PC-9 (cell line): ENCODE measurements at regions of chr5 and their contacts with region 1.

Region 1: DNA sequence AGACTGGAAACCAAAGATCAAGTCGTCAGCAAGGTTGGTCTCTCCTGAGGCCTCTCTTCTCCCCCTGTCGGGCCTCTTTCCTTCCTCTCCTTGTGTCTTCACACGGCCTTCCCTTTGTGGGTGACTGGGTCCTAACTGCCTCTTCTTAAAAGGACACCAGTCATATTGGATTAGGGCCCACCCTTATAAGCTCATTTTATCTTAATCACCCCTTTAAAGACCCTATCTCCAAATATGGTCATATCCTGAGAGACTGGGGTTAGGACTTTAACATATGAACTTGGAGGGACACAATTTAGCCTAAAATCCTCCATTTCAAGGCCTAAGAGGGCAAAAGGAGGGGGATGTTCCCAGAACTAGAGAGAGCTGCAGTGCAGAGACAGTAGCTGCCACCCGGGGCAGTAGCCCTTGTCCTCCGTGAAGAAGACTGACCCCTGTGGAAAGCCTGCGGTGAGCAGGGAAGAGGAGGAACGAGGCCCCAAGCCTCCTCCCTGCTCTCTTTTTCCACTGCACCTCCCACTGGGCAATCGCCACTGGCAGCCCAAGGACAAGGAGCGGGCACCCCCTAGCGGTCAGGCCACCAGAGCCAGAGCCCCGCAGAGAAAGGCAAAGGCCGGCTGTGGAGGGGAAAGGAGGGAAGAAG is 34.9 kb downstream of the CFAP90 start:
- DNase-seq: peak in 1 of 2 experiments; percentile 77
- H3K4me3 ChIP-seq: no peak overlapping the region
- H3K27ac ChIP-seq: no peak overlapping the region
- H3K4me1 ChIP-seq: no peaks in the 10 kb centered on the region
- H3K27me3 ChIP-seq: peaks cover 96% of the 10 kb centered on the region
- CTCF ChIP-seq: peak; percentile 92

Region 2: DNA sequence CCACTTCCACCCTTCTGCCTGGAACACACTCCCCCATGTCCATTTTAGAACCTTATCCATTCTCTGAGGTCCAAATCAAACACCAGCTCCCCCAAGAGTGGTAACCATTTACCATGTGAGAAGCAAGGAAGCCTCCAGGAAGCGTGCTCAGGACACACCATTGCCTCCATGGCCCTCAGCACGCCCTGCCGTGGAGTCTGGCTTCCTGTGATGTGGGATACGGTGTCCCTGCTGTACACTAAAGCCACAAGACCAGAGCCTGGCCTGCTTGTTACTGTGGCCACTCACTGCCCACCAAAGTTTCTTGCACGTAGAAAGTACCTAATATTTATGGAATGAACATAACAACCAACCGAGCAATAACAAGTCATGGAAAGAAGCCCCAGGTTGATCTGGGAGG is 1578.2 kb after region 1 on chr5:
- CTCF ChIA-PET with region 1: interaction called, 18 read pairs
- POLR2A ChIA-PET with region 1: no interaction called
- intact Hi-C with region 1: no loop called
- DNase-seq: no peak
- H3K4me3 ChIP-seq: no peak overlapping the region
- H3K27ac ChIP-seq: no peak overlapping the region
- H3K4me1 ChIP-seq: no peaks in the 10 kb centered on the region
- H3K27me3 ChIP-seq: no peaks in the 10 kb centered on the region
- CTCF ChIP-seq: no peak